ENCODE measurements at regions of chr11 and their contacts with region 1.

Region 1: DNA sequence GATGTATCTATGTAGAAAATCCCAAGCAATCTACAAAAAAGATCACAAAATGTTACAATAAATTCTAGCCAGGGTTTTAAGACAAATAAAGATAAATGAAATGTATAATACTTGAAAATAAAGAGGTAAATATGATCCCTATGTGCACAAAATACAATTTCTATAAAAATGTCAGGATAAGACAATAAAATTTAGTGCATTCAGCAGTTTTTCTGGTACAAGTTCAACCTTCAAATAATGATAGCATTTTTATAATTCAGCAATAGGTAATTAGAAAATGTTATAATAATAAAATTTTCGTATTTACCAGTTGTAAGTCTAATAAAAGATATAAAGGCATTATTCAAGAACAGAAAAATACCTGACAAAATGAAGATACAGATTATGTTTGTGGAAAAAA is 726.8 kb upstream of the FAT3 start:
- DNase-seq: no peak
- ATAC-seq: no peak
- H3K4me3 ChIP-seq: no peak overlapping the region
- H3K27ac ChIP-seq: no peak overlapping the region
- H3K4me1 ChIP-seq: no peaks in the 10 kb centered on the region
- H3K27me3 ChIP-seq: no peaks in the 10 kb centered on the region
- CTCF ChIP-seq: no peak
- EP300 ChIP-seq: no peak
- POLR2A ChIP-seq: no peak
- RAD21 ChIP-seq: no peak

Region 2: DNA sequence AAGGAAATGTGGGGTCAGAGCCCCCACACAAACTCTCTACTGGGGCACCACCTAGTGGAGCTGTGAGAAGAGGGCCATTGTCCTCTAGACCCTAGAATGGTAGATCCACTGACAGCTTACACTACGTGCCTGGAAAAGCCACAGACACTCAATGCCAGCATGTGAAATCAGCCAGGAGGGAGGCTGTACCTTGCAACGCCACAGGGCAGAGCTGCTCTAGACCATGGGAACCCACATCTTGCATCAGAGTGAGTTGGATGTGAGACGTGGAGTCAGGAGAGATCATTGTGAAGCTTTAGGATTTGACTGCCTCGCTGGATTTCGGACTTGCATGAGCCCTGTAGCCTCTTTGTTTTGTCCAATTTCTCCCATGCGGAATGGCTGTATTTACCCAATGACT is 821.9 kb before region 1 on chr11:
- CTCF ChIA-PET with region 1: no interaction called
- POLR2A ChIA-PET with region 1: no interaction called
- RAD21 ChIA-PET with region 1: no interaction called
- SMC1A ChIA-PET with region 1: no interaction called
- in situ Hi-C with region 1: no loop called
- intact Hi-C with region 1: no loop called
- DNase-seq: no peak
- ATAC-seq: no peak
- H3K4me3 ChIP-seq: no peak overlapping the region
- H3K27ac ChIP-seq: no peak overlapping the region
- H3K4me1 ChIP-seq: no peaks in the 10 kb centered on the region
- H3K27me3 ChIP-seq: no peaks in the 10 kb centered on the region
- CTCF ChIP-seq: no peak
- EP300 ChIP-seq: no peak
- POLR2A ChIP-seq: no peak
- RAD21 ChIP-seq: no peak

Region 3: DNA sequence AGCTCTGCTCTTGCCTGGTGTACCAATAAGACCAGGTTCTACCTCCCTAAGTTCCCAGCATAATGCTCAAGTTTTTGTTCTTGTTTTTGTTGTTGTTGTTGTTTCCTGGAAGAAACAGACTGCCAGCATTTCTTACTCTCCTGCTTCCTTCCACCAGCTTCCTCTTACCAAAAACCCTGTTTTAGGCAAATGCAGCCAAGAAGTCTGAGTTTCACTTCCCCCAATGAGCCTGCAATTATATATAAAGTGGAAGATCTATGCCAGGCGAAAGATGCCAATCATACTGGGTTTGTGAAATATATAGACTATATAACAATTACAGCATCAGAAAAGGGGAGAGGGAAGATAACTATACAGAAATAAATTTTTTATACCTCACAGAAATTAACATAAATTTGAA is 204.7 kb before region 1 on chr11:
- CTCF ChIA-PET with region 1: no interaction called
- POLR2A ChIA-PET with region 1: no interaction called
- RAD21 ChIA-PET with region 1: no interaction called
- SMC1A ChIA-PET with region 1: no interaction called
- in situ Hi-C with region 1: no loop called
- intact Hi-C with region 1: no loop called
- DNase-seq: no peak
- ATAC-seq: peak; percentile 51
- H3K4me3 ChIP-seq: no peak overlapping the region
- H3K27ac ChIP-seq: no peak overlapping the region
- H3K4me1 ChIP-seq: no peaks in the 10 kb centered on the region
- H3K27me3 ChIP-seq: no peaks in the 10 kb centered on the region
- CTCF ChIP-seq: no peak
- EP300 ChIP-seq: no peak
- POLR2A ChIP-seq: no peak
- RAD21 ChIP-seq: no peak

Region 4: GRCh38 chr11:91527380-91528030 is 29.7 kb after region 1 on chr11:
- CTCF ChIA-PET with region 1: no interaction called
- POLR2A ChIA-PET with region 1: no interaction called
- RAD21 ChIA-PET with region 1: no interaction called
- SMC1A ChIA-PET with region 1: no interaction called
- in situ Hi-C with region 1: no loop called
- intact Hi-C with region 1: loop called (anchors 1 kb)
- DNase-seq: no peak
- ATAC-seq: no peak
- H3K4me3 ChIP-seq: no peak overlapping the region
- H3K27ac ChIP-seq: no peak overlapping the region
- H3K4me1 ChIP-seq: no peaks in the 10 kb centered on the region
- H3K27me3 ChIP-seq: no peaks in the 10 kb centered on the region
- CTCF ChIP-seq: no peak
- EP300 ChIP-seq: no peak
- POLR2A ChIP-seq: no peak
- RAD21 ChIP-seq: no peak